ENCODE measurements at regions of chr1 and their contacts with region 1.

Region 1: DNA sequence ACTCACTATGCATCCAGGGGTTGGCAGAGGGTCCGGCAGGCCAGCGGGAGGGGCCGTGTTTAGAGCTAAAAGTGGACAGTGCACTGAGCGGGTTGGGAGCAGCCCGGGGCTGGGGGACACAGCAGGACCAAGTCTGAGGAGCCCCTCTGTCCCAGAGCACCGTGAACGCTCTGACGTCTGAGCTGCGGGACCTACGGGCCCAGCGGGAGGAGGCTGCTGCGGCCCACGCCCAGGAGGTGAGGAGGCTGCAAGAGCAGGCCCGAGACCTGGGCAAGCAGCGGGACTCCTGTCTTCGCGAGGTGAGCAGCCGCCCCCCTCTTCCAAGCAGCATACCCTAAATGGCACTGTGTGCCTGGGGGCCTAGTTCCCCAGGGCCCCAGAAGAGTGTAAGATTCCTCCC is 25.8 kb downstream of the MFAP2 start:
- DNase-seq: no peak
- H3K4me3 ChIP-seq: no peak overlapping the region
- H3K27ac ChIP-seq: no peak overlapping the region
- H3K4me1 ChIP-seq: no peaks in the 10 kb centered on the region
- H3K27me3 ChIP-seq: no peaks in the 10 kb centered on the region
- CTCF ChIP-seq: no peak
- POLR2A ChIP-seq: no peak

Region 2: DNA sequence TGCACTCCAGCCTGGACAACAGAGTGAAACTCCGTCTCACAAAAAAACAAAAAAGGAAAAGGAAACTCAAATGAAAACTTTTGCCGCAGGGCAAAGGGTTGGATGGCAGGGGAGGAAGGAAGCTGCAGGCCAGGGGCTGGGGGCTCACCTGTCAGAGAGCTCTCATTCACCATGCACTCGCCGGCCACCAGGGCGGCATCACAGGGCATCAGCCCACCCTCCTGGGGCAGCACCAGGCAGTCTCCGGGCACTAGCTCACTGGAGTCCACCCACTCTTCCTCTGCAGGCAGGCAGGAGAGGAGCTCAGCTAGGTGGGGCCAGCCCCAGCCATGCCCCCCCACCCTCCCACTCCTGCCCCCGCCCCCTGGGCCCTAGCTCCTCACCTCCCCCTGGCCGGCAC is 45.3 kb after region 1 on chr1:
- intact Hi-C with region 1: no loop called
- DNase-seq: no peak
- H3K4me3 ChIP-seq: no peak overlapping the region
- H3K27ac ChIP-seq: no peak overlapping the region
- H3K4me1 ChIP-seq: no peaks in the 10 kb centered on the region
- H3K27me3 ChIP-seq: no peaks in the 10 kb centered on the region
- CTCF ChIP-seq: no peak
- POLR2A ChIP-seq: no peak

Region 3: GRCh38 chr1:17045634-17046333 is 91.2 kb after region 1 on chr1:
- intact Hi-C with region 1: loop called (anchors 5 kb)
- DNase-seq: no peak
- H3K4me3 ChIP-seq: no peak overlapping the region
- H3K27ac ChIP-seq: peak overlapping the region in 1 of 3 donors; percentile 5
- H3K4me1 ChIP-seq: no peaks in the 10 kb centered on the region
- H3K27me3 ChIP-seq: no peaks in the 10 kb centered on the region
- CTCF ChIP-seq: peak in 5 of 6 experiments; percentile 33 to 90 (median 84)
- POLR2A ChIP-seq: no peak

Region 4: DNA sequence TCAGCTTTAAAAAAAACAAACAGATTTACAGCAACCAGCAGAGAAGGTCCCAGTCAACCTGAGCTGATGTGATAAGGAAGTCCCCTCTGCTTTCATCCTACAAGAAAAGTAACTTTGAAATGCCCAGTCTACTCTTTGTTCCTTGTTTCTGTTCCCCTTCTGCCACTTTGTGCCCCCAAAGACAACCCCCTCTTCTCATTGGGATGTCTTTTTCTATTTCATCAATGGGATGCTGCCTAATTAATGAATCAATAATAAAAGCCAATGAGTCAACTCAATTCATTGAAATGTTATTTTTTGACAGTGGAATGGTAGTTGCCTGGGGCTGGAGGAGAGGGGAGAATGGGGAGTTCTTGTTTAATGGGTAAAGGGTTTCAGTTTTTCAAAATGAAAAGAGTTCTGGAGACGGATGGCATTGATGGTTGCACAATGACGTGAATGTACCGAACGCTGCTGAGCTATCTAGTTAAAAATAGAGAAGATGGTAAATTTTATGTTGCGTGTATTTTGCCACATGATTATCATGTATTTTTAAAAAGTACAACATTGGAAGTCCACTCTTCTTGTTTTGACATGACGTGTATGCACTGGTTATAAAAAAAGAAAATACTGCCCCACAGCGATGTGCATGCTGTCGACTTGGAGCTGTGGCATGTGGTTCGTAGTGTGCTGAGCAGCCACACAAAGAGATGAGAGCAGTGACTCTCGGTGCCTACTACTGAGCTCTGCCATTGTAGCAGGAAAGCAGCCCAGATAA is 187.0 kb after region 1 on chr1:
- intact Hi-C with region 1: no loop called
- DNase-seq: no peak
- H3K4me3 ChIP-seq: no peak overlapping the region
- H3K27ac ChIP-seq: no peak overlapping the region
- H3K4me1 ChIP-seq: no peaks in the 10 kb centered on the region
- H3K27me3 ChIP-seq: no peaks in the 10 kb centered on the region
- CTCF ChIP-seq: no peak
- POLR2A ChIP-seq: no peak

Region 5: GRCh38 chr1:17293681-17294425 is 339.3 kb after region 1 on chr1:
- intact Hi-C with region 1: no loop called
- DNase-seq: no peak
- H3K4me3 ChIP-seq: no peak overlapping the region
- H3K27ac ChIP-seq: no peak overlapping the region
- H3K4me1 ChIP-seq: no peaks in the 10 kb centered on the region
- H3K27me3 ChIP-seq: no peaks in the 10 kb centered on the region
- CTCF ChIP-seq: no peak
- POLR2A ChIP-seq: no peak